ENCODE measurements at regions of chr5 and their contacts with region 1.

Region 1: GRCh38 chr5:33440482-33441240 is at the start of gene TARS1:
- DNase-seq: peak; percentile 96
- H3K4me3 Mint-ChIP-seq: no peak within 1 kb of the TSS
- H3K27ac Mint-ChIP-seq: no peak within 1 kb of the TSS
- H3K4me1 Mint-ChIP-seq: peaks cover 29% of the 10 kb centered on the region
- H3K27me3 Mint-ChIP-seq: no peaks in the 10 kb centered on the region
- total RNA-seq, gene TARS1: 244 to 260 TPM

Region 2: GRCh38 chr5:32312647-32313523 is 1127.8 kb before region 1 on chr5 and contains the start of gene MTMR12:
- CTCF ChIA-PET with region 1: no interaction called
- intact Hi-C with region 1: loop called (anchors 2 kb)
- DNase-seq: peak; percentile 100
- H3K4me3 Mint-ChIP-seq: peak within 1 kb of the TSS; percentile 84
- H3K27ac Mint-ChIP-seq: peak within 1 kb of the TSS; percentile 84
- H3K4me1 Mint-ChIP-seq: peaks cover 27% of the 10 kb centered on the region
- H3K27me3 Mint-ChIP-seq: no peaks in the 10 kb centered on the region
- total RNA-seq, gene MTMR12: 14.1 to 16.0 TPM

Region 3: GRCh38 chr5:33457126-33457525 is 16.5 kb after region 1 on chr5:
- CTCF ChIA-PET with region 1: interaction called, 6 read pairs
- intact Hi-C with region 1: loop called (anchors 1 kb)
- DNase-seq: no peak
- H3K4me3 Mint-ChIP-seq: no peak overlapping the region
- H3K27ac Mint-ChIP-seq: no peak overlapping the region
- H3K4me1 Mint-ChIP-seq: peaks cover 4% of the 10 kb centered on the region
- H3K27me3 Mint-ChIP-seq: no peaks in the 10 kb centered on the region

Region 4: DNA sequence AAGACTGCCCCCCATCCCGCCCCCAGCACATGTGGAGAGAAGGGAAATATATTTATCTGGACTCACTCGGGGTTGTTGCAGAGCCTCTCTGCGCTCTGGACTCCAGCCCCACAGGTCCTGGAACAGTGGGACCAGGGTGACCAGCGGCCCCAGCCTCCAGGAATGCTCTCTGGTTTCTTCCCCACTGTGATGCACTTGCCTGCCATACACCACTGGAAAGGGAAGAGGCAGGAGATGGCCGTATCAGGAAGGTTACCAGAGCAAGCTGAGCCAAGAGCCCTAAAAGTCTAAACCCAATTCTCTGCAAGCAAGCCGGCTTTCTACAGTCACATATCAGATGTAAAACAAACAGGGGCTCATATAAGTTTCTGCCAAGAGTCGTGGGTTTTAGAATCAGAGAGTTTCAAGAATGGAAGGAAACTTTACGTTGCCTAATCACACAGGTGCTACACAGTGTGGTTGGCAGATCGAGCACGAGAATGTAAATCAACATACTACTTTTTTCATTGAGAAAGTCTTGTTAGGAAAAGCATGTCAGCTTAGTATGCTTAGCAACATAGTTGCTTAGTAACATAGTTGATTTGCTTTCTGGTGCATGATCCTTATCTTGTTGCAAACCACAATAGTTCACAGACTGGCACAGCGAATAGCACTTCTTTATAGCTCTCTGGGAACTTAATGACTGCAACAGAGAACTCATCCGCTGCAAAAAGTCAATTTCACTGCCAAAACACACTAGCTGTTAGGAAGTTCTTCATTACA is 201.3 kb after region 1 on chr5:
- CTCF ChIA-PET with region 1: no interaction called
- intact Hi-C with region 1: loop called (anchors 10 kb)
- DNase-seq: no peak
- H3K4me3 Mint-ChIP-seq: no peak overlapping the region
- H3K27ac Mint-ChIP-seq: no peak overlapping the region
- H3K4me1 Mint-ChIP-seq: peaks cover 10% of the 10 kb centered on the region
- H3K27me3 Mint-ChIP-seq: peaks cover 3% of the 10 kb centered on the region

Region 5: GRCh38 chr5:33969572-33970452 is 529.2 kb after region 1 on chr5:
- CTCF ChIA-PET with region 1: interaction called, 3 read pairs
- intact Hi-C with region 1: loop called (anchors 1 kb)
- DNase-seq: peak; percentile 12
- H3K4me3 Mint-ChIP-seq: no peak overlapping the region
- H3K27ac Mint-ChIP-seq: no peak overlapping the region
- H3K4me1 Mint-ChIP-seq: peaks cover 13% of the 10 kb centered on the region
- H3K27me3 Mint-ChIP-seq: no peaks in the 10 kb centered on the region

Region 6: DNA sequence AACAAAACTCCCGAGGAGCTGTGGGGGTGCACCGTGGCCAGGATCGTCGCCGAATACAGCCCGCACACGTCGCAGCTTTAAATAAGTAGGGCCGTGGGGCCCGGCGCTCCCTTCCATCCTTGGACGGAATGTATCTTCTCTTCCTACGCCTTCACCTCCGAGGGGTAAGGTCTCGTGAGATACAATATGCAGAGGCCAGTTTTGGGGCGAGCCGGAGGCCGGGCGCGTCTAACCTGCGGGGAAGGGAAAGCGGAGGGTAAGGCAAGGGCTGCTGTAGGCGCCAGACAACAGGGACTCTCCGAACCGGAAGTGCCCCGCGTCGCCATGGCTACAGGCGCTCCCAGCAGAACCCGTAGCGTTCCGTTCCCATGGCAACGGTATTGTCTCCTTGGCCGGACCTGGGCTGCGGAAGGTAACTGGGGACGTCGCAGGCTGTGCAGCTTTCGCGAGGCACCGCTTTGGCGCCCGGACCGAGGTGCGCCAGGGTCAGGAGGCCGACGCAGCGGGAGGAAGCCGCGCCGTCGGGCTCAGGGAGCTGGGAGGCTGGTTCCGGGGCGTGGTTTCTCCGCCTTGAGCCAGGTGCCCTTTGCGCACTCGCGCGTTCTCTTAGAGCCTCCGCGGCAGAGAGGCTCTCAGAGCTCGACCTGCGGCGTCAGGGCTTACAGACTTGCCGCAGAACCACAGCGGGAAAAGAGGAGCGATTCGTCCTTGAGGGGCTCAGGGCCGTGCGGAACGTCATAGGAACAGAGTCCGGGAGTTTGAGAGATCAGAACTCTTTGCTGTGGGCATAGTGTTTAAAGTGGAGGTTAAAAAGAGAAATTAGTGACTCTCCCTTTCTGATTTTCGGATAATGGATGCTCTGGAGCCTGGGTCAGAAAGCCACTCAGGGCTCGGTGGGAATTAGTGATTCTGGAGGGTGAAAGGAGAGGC is 1398.4 kb after region 1 on chr5 and contains the start of gene TTC23L:
- CTCF ChIA-PET with region 1: no interaction called
- intact Hi-C with region 1: loop called (anchors 1 kb)
- DNase-seq: peak; percentile 94
- H3K4me3 Mint-ChIP-seq: peak within 1 kb of the TSS; percentile 88
- H3K27ac Mint-ChIP-seq: peak within 1 kb of the TSS; percentile 75
- H3K4me1 Mint-ChIP-seq: peaks cover 11% of the 10 kb centered on the region
- H3K27me3 Mint-ChIP-seq: no peaks in the 10 kb centered on the region
- total RNA-seq, gene TTC23L: 0.42 to 0.43 TPM